Spleen (tissue), 13 donors: ENCODE measurements at regions of chr22 and their contacts with region 1.

Region 1: DNA sequence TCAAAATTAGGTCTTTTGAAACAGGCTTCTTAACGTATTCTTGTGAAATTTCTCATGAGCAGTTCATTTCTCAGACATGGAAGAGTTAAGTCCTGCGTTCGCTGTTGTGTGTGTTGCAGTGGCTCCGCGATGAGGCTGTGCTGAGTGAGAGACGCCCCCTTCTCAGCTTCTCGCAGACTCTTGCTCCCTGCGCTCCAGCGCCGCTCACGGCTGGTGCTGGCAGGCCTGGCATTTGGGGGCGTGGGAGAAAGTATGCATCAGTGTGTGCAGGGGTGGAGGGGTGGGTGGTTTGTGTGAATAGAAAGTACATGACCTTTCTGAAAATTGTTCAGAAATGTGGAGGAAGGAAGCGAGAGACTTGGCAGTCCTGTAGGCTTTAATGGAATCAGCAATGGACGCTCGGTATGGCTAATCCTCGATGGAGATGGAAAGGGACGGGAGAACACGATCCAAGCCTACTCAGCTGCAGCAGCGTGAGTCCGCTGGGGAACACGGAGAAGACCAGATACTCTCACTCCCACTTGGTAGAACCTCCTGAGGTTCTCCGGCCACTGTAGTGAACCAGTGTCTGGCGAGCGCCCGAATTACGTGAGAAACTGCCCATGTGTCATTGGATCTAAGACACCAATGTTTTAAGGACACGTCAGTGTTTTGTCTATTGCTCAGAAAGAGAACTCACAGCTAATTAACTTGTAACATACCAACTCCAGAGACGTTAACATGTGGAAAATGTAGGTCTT is 5.9 kb downstream of the TAB1 start:
- DNase-seq: peak; percentile 43
- H3K4me3 ChIP-seq: peak overlapping the region in 1 of 8 donors; percentile 6
- H3K27ac ChIP-seq: peak overlapping the region in 6 of 8 donors; percentile 2 to 44 (median 33)
- H3K4me1 ChIP-seq: peaks cover 6 to 90% (median 20%) of the 10 kb centered on the region in 6 donors
- H3K27me3 ChIP-seq: no peaks in the 10 kb centered on the region
- CTCF ChIP-seq: no peak
- POLR2A ChIP-seq: no peak

Region 2: DNA sequence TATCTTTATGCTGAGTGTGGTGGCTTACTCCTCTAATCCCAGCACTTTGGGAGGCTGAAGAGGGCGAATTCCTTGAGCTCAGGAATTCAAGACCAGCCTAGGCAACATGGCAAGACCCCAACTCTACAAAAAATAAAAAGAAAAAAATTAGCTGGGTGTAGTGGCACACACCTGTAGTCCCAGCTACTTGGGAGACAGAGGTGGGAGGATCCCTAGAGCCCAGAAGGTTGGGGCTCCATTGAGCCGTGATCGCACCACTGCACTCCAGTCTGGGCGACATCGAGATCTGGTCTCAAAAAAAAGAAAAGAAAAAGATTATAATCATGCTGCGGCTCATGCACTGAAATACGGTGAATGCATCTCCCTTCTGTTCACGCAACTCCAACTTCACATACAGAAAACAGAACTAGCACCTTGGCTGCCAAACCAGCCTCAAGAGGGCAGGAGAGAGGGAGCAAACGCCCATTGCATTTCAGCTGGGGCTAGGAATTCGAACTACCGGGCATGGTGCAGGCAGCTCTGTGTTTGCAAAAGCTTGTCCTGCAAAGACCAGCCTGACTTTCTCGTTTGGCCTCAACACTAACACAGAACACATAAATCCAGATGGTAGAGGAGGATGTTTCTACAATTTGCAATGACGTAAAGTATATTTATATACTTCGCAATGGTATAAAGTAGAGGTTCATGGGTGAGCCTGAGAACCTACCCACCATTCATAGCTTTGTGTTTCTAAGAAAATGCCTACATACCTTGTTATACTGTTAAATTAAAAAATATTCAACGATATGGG is 62.1 kb before region 1 on chr22:
- intact Hi-C with region 1: no loop called
- DNase-seq: no peak
- H3K4me3 ChIP-seq: no peak overlapping the region
- H3K27ac ChIP-seq: no peak overlapping the region
- H3K4me1 ChIP-seq: peaks cover 0 to 10% (median 7%) of the 10 kb centered on the region in 6 donors
- H3K27me3 ChIP-seq: no peaks in the 10 kb centered on the region
- CTCF ChIP-seq: peak; percentile 22 to 78 (median 62)
- POLR2A ChIP-seq: no peak

Region 3: GRCh38 chr22:39490135-39490798 is 84.8 kb after region 1 on chr22:
- intact Hi-C with region 1: loop called (anchors 10 kb)
- DNase-seq: peak; percentile 97
- H3K4me3 ChIP-seq: peak overlapping the region in 1 of 8 donors; percentile 45
- H3K27ac ChIP-seq: peak overlapping the region in 3 of 8 donors; percentile 19 to 57 (median 41)
- H3K4me1 ChIP-seq: peaks cover 6 to 38% (median 11%) of the 10 kb centered on the region in 6 donors
- H3K27me3 ChIP-seq: no peaks in the 10 kb centered on the region
- CTCF ChIP-seq: no peak
- POLR2A ChIP-seq: no peak